CD8-positive, alpha-beta T cell (primary cell): ENCODE measurements at regions of chr11 and their contacts with region 1.

Region 1: GRCh38 chr11:64204464-64204989 is 2.0 kb upstream of the FERMT3 start:
- DNase-seq: peak; percentile 72 to 94 (median 87)
- ATAC-seq: peak; percentile 51
- H3K4me3 ChIP-seq: no peak overlapping the region
- H3K4me3 Mint-ChIP-seq: peak overlapping the region; percentile 63
- H3K27ac ChIP-seq: peak overlapping the region in 1 of 2 experiments; percentile 25
- H3K27ac Mint-ChIP-seq: peak overlapping the region; percentile 75
- H3K4me1 ChIP-seq: peaks cover 29% of the 10 kb centered on the region
- H3K4me1 Mint-ChIP-seq: peaks cover 37% of the 10 kb centered on the region
- H3K27me3 ChIP-seq: no peaks in the 10 kb centered on the region
- H3K27me3 Mint-ChIP-seq: no peaks in the 10 kb centered on the region
- CTCF ChIP-seq: peak; percentile 71

Region 2: DNA sequence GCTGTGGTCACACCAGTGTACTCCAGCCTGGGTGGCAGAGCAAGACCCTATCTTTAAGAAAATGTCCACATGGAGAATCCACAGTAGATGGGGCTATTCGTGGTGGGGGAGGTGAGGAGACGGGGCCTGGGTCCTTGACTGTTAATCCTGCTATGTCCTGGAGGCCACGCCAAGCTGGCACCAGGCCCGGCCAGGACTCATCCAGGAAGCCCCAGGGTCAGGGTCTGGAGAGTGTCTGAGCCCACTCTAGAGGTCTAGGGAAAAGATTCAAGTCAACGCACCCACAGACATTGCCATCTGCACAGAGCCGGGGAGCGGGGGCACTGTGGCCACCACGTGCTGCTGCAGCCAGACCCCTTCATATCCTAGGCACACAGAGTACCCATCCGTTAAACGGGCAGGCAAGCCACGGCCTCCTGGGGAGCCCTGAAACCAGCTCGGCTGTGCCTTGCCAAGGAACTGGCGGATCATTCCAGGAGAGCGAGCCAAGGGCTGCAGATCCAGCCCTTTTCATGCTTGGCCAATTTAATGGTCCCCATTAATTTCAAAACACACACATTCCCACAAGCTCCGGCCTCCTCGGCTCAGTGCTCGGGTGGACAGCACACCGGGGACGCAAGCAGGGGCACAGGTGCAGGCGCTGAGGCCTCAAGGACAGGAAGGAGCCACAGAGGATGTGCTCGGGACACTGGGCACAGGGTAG is 63.3 kb before region 1 on chr11:
- CTCF ChIA-PET with region 1: no interaction called
- POLR2A ChIA-PET with region 1: no interaction called
- intact Hi-C with region 1: no loop called
- DNase-seq: no peak
- ATAC-seq: no peak
- H3K4me3 ChIP-seq: no peak overlapping the region
- H3K4me3 Mint-ChIP-seq: no peak overlapping the region
- H3K27ac ChIP-seq: no peak overlapping the region
- H3K27ac Mint-ChIP-seq: no peak overlapping the region
- H3K4me1 ChIP-seq: no peaks in the 10 kb centered on the region
- H3K4me1 Mint-ChIP-seq: peaks cover 4% of the 10 kb centered on the region
- H3K27me3 ChIP-seq: no peaks in the 10 kb centered on the region
- H3K27me3 Mint-ChIP-seq: no peaks in the 10 kb centered on the region
- CTCF ChIP-seq: no peak

Region 3: GRCh38 chr11:64185816-64186498 is 18.6 kb before region 1 on chr11 and contains the start of gene STIP1:
- CTCF ChIA-PET with region 1: interaction called, 32 read pairs
- POLR2A ChIA-PET with region 1: interaction called, 24 read pairs
- intact Hi-C with region 1: loop called (anchors 1 to 2 kb)
- DNase-seq: peak; percentile 96 to 100 (median 98)
- ATAC-seq: peak; percentile 87
- H3K4me3 ChIP-seq: peak within 1 kb of the TSS; percentile 79 to 88
- H3K4me3 Mint-ChIP-seq: peak within 1 kb of the TSS; percentile 96
- H3K27ac ChIP-seq: peak within 1 kb of the TSS; percentile 57 to 85
- H3K27ac Mint-ChIP-seq: peak within 1 kb of the TSS; percentile 97
- H3K4me1 ChIP-seq: peaks cover 39% of the 10 kb centered on the region
- H3K4me1 Mint-ChIP-seq: peaks cover 43% of the 10 kb centered on the region
- H3K27me3 ChIP-seq: no peaks in the 10 kb centered on the region
- H3K27me3 Mint-ChIP-seq: no peaks in the 10 kb centered on the region
- CTCF ChIP-seq: peak; percentile 36
- total RNA-seq, gene STIP1: 37.0 to 37.7 TPM

Region 4: GRCh38 chr11:64225612-64226506 is 21.3 kb after region 1 on chr11 and contains the starts of genes NUDT22 and TRPT1:
- CTCF ChIA-PET with region 1: interaction called, 263 read pairs
- POLR2A ChIA-PET with region 1: interaction called, 86 read pairs
- intact Hi-C with region 1: loop called (anchors 1 kb)
- DNase-seq: peak; percentile 75 to 96 (median 93)
- ATAC-seq: peak; percentile 65
- H3K4me3 ChIP-seq: peak within 1 kb of the TSS; percentile 76 to 100
- H3K4me3 Mint-ChIP-seq: peak within 1 kb of the TSS; percentile 93
- H3K27ac ChIP-seq: peak within 1 kb of the TSS; percentile 85 to 88
- H3K27ac Mint-ChIP-seq: peak within 1 kb of the TSS; percentile 91
- H3K4me1 ChIP-seq: peaks cover 41% of the 10 kb centered on the region
- H3K4me1 Mint-ChIP-seq: peaks cover 30% of the 10 kb centered on the region
- H3K27me3 ChIP-seq: no peaks in the 10 kb centered on the region
- H3K27me3 Mint-ChIP-seq: no peaks in the 10 kb centered on the region
- CTCF ChIP-seq: peak; percentile 58
- total RNA-seq, gene NUDT22: 20.1 to 23.6 TPM
- total RNA-seq, gene TRPT1: 12.3 to 14.3 TPM

Region 5: DNA sequence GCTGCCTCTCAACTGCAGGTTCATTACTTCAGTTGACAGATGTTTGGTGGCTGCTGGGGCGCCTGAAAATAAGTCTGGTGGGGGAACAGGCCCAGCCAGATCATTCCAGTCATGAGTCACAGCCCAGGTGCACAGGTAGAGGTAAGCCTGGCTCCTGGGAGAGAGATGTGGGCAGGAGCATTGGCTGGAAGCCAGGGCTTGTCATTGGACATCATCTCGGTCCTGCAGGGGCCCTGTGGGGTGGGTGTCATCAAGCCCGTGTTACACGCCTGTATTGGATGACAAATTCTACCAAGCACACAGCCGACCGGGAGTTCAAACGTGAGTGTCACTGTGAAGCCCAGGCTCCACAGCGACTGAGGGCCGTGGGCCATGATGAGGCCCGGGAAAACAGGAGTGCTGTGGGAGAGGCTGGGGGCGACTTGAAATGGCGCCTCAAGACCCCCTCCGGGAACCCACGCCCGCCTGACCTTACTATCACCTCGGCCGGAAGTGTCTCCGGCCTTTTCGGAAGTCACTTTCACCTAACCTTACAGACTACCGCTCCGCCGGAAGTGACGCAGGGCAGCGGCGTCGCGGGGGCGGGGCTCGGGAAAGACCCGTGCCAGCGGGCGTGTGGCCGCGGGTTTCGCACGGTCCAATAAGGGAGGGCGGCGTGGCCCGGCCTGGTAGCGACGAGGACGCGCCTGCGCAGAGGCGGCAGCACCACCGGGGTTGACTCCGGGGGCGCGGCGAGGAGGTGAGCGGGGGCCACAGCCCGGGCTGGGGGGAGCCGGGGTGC is 36.1 kb after region 1 on chr11 and contains the start of gene FKBP2:
- CTCF ChIA-PET with region 1: interaction called, 45 read pairs
- POLR2A ChIA-PET with region 1: interaction called, 96 read pairs
- intact Hi-C with region 1: loop called in 1 of 2 experiments (anchors 1 kb)
- DNase-seq: peak; percentile 94 to 100 (median 97)
- ATAC-seq: peak; percentile 63
- H3K4me3 ChIP-seq: peak within 1 kb of the TSS; percentile 80 to 97
- H3K4me3 Mint-ChIP-seq: peak within 1 kb of the TSS; percentile 90
- H3K27ac ChIP-seq: peak within 1 kb of the TSS; percentile 94 to 99
- H3K27ac Mint-ChIP-seq: peak within 1 kb of the TSS; percentile 100
- H3K4me1 ChIP-seq: peaks cover 29% of the 10 kb centered on the region
- H3K4me1 Mint-ChIP-seq: peaks cover 34% of the 10 kb centered on the region
- H3K27me3 ChIP-seq: no peaks in the 10 kb centered on the region
- H3K27me3 Mint-ChIP-seq: no peaks in the 10 kb centered on the region
- CTCF ChIP-seq: no peak
- total RNA-seq, gene FKBP2: 19.4 TPM

Region 6: DNA sequence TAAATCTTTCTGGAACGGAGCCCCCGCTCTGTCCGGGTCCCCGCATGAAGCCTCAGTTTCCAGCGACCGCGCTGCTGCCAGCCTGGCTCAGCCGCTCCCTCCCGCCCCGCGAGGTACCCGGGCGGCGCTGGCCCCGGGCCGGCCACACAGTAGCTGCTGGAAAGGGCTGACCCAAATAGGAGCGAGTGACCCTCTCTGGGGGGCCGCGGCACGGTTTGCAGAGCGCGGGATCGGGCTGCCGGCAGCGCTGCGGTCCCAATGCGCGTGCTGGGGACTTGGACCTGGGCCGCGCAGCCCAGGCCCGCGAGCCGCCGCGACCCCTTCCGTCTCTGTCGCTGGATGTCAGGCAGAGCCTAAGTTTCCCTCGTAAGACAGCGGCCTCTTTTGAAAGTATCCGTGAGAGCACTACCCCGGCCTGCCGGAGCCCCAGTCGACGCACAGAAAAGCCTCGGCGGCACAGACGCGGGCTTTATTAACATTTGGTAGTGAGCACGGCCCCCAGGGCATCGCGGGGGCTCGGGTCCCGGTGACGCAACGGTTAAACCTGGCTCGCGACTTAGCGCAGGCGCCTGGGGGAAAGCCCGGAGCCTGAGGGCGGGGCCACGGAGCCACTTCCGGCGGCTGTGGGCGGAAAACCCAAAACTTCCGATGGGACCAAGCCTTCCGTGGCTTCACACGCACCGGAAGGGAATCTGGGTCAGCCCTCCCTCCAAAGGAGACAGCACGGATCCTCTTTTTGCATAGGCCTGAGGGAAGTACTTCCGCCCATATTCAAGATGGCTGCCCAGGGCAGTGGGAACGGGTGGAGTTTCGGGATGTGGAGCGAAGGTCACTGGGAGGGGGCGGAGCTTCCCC is 65.1 kb after region 1 on chr11:
- CTCF ChIA-PET with region 1: interaction called, 21 read pairs
- POLR2A ChIA-PET with region 1: interaction called, 48 read pairs
- intact Hi-C with region 1: loop called (anchors 1 kb)
- DNase-seq: peak; percentile 94 to 99 (median 97)
- ATAC-seq: peak; percentile 64
- H3K4me3 ChIP-seq: peak overlapping the region; percentile 79 to 81
- H3K4me3 Mint-ChIP-seq: peak overlapping the region; percentile 95
- H3K27ac ChIP-seq: peak overlapping the region; percentile 69 to 99
- H3K27ac Mint-ChIP-seq: peak overlapping the region; percentile 94
- H3K4me1 ChIP-seq: peaks cover 24% of the 10 kb centered on the region
- H3K4me1 Mint-ChIP-seq: peaks cover 27% of the 10 kb centered on the region
- H3K27me3 ChIP-seq: no peaks in the 10 kb centered on the region
- H3K27me3 Mint-ChIP-seq: no peaks in the 10 kb centered on the region
- CTCF ChIP-seq: peak; percentile 40

Region 7: GRCh38 chr11:64331557-64332371 is 127.2 kb after region 1 on chr11:
- CTCF ChIA-PET with region 1: interaction called, 18 read pairs
- POLR2A ChIA-PET with region 1: interaction called, 5 read pairs
- intact Hi-C with region 1: no loop called
- DNase-seq: peak; percentile 53 to 87 (median 74)
- ATAC-seq: peak; percentile 89
- H3K4me3 ChIP-seq: no peak overlapping the region
- H3K4me3 Mint-ChIP-seq: peak overlapping the region; percentile 27
- H3K27ac ChIP-seq: peak overlapping the region in 1 of 2 experiments; percentile 61
- H3K27ac Mint-ChIP-seq: peak overlapping the region; percentile 52
- H3K4me1 ChIP-seq: peaks cover 6% of the 10 kb centered on the region
- H3K4me1 Mint-ChIP-seq: peaks cover 12% of the 10 kb centered on the region
- H3K27me3 ChIP-seq: no peaks in the 10 kb centered on the region
- H3K27me3 Mint-ChIP-seq: no peaks in the 10 kb centered on the region
- CTCF ChIP-seq: peak; percentile 51

Region 8: GRCh38 chr11:64448599-64449556 is 244.4 kb after region 1 on chr11:
- CTCF ChIA-PET with region 1: no interaction called
- POLR2A ChIA-PET with region 1: no interaction called
- intact Hi-C with region 1: loop called in 1 of 2 experiments (anchors 10 kb)
- DNase-seq: peak; percentile 50 to 81 (median 74)
- ATAC-seq: peak; percentile 65
- H3K4me3 ChIP-seq: peak overlapping the region; percentile 49 to 52
- H3K4me3 Mint-ChIP-seq: peak overlapping the region; percentile 85
- H3K27ac ChIP-seq: no peak overlapping the region
- H3K27ac Mint-ChIP-seq: peak overlapping the region; percentile 62
- H3K4me1 ChIP-seq: peaks cover 13% of the 10 kb centered on the region
- H3K4me1 Mint-ChIP-seq: peaks cover 14% of the 10 kb centered on the region
- H3K27me3 ChIP-seq: no peaks in the 10 kb centered on the region
- H3K27me3 Mint-ChIP-seq: peaks cover 10% of the 10 kb centered on the region
- CTCF ChIP-seq: peak; percentile 70